Activated CD4-positive, alpha-beta memory T cell treated with anti-CD3 and anti-CD28 coated beads, Interleukin-2, amount 10 ng/mL, durations not matched to agents 7 days and 5 days (primary cell): ENCODE measurements at regions of chr10 and their contacts with region 1.

Region 1: GRCh38 chr10:118568327-118568848 is 27.1 kb downstream of the PRLHR start:
- DNase-seq: peak; percentile 47
- H3K4me3 Mint-ChIP-seq: no peak overlapping the region
- H3K27ac Mint-ChIP-seq: no peak overlapping the region
- H3K4me1 Mint-ChIP-seq: no peaks in the 10 kb centered on the region
- H3K27me3 Mint-ChIP-seq: peaks cover 3% of the 10 kb centered on the region

Region 2: GRCh38 chr10:118712930-118713634 is 144.7 kb after region 1 on chr10:
- CTCF ChIA-PET with region 1: interaction called, 114 read pairs
- POLR2A ChIA-PET with region 1: no interaction called
- DNase-seq: no peak
- H3K4me3 Mint-ChIP-seq: no peak overlapping the region
- H3K27ac Mint-ChIP-seq: no peak overlapping the region
- H3K4me1 Mint-ChIP-seq: peaks cover 5% of the 10 kb centered on the region
- H3K27me3 Mint-ChIP-seq: no peaks in the 10 kb centered on the region

Region 3: DNA sequence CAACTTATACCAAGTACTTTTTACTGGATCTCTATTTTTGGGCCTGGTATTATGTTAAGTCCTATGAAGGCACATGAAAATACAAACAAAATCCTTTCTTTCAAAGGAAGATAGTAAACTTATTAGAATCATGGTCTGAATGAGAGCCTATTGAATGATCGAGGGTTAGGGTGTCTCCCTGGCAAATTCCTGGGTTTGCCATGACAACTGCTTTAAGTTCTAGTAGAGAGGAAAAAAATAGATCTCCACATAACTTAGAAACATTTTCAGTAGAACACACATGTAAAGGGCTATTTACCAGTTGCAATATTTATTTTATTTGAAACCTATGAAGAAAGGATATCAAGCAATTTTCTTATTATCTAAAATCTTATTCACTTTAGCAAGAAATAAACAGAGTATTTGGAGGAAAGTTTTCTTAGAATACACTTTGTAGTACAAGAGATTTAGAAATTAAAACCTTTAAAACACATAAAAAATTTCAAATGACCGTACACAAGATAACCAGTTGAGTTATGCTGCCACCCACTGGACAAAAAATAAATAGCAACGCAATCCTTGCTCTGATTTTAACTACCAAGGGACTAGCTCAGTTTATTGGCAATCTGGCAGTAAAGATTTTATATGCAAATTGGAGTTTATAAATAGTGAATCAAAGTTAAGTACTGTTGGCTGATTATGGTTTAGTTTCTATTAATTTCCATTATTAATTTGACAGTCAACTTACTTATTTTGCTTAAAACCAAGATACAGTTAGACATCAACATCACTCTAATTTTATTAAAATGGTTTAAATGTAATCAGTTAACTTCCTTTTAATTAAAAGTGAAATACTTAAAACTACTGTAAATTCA is 152.5 kb after region 1 on chr10:
- CTCF ChIA-PET with region 1: interaction called, 114 read pairs
- POLR2A ChIA-PET with region 1: no interaction called
- DNase-seq: peak; percentile 55
- H3K4me3 Mint-ChIP-seq: no peak overlapping the region
- H3K27ac Mint-ChIP-seq: no peak overlapping the region
- H3K4me1 Mint-ChIP-seq: peaks cover 3% of the 10 kb centered on the region
- H3K27me3 Mint-ChIP-seq: no peaks in the 10 kb centered on the region

Region 4: GRCh38 chr10:118754720-118755480 is 186.5 kb after region 1 on chr10 and contains the start of gene CACUL1:
- CTCF ChIA-PET with region 1: interaction called, 10 read pairs
- POLR2A ChIA-PET with region 1: no interaction called
- DNase-seq: peak; percentile 100
- H3K4me3 Mint-ChIP-seq: peak within 1 kb of the TSS; percentile 87
- H3K27ac Mint-ChIP-seq: peak within 1 kb of the TSS; percentile 78
- H3K4me1 Mint-ChIP-seq: peaks cover 25% of the 10 kb centered on the region
- H3K27me3 Mint-ChIP-seq: peaks cover 6% of the 10 kb centered on the region
- total RNA-seq, gene CACUL1: 25.8 to 27.9 TPM

Region 5: DNA sequence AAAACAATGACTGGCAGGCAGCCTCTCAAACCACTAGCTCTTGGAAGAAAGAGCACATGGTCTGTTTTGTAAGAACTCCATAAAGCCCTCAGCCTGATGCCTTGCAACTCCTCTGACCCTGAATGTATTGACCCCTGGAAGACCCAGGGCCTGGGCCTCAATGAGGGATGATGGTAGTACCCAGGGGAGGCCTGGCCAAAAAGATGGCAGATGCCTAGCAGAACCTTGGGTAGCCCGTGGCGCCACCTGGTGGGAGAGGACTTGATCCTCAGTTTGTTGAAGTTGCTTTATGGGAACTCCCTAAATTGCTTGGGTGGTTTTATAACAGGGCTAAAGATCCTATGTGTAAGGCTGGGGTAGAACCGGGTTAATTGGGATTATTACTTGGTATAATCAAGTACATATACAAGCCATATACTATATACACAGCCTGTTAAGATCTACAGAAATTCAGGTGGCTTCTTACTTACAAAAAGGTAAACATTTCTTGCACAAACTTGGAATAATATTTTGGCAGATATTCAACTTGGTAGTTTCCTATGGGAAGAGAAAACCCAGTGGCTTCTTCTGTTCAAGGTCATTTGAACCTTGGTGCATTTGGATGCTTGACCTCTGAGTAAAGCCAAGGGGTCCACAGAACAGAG is 282.2 kb after region 1 on chr10:
- CTCF ChIA-PET with region 1: interaction called, 13 read pairs
- POLR2A ChIA-PET with region 1: no interaction called
- DNase-seq: peak; percentile 73
- H3K4me3 Mint-ChIP-seq: no peak overlapping the region
- H3K27ac Mint-ChIP-seq: no peak overlapping the region
- H3K4me1 Mint-ChIP-seq: no peaks in the 10 kb centered on the region
- H3K27me3 Mint-ChIP-seq: peaks cover 8% of the 10 kb centered on the region